ENCODE measurements at regions of chr4 and their contacts with region 1.

Region 1: DNA sequence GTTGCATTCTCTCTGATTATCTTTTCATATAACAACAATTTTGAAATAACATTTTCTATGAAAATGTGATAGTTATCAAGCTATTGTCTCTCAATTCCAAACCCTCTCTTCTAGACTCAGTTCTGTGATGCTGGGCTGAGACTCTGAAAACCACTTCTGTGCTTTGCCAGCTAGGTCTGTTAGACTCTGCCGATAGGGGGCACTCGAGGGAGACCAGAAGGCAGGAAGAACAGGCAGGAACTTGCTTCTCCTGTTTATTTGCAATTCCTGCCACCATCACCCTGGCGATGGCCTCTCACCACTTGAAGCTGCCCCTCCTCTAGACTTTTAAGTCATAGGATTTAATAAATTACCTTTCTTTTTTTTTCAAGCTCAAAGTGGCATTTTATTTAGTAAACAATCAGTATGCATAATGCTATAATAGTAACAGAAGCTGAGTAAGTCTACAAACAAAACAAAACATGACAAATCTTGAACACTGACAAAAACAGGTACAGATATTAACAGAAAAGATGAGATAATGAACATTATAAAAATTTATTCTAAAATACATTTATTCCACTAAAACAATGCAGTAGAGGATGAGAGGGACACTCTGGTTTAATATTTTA is 49.7 kb downstream of the RASL11B start:
- DNase-seq: peak; percentile 82
- H3K4me3 Mint-ChIP-seq: no peak overlapping the region
- H3K27ac Mint-ChIP-seq: no peak overlapping the region
- H3K4me1 Mint-ChIP-seq: peaks cover 6% of the 10 kb centered on the region
- H3K27me3 Mint-ChIP-seq: no peaks in the 10 kb centered on the region
- CTCF ChIP-seq: peak; percentile 60

Region 2: GRCh38 chr4:52721968-52722815 is 189.6 kb before region 1 on chr4:
- CTCF ChIA-PET with region 1: no interaction called
- POLR2A ChIA-PET with region 1: no interaction called
- intact Hi-C with region 1: loop called (anchors 2 kb)
- DNase-seq: peak; percentile 98
- H3K4me3 Mint-ChIP-seq: peak overlapping the region; percentile 72
- H3K27ac Mint-ChIP-seq: peak overlapping the region; percentile 11
- H3K4me1 Mint-ChIP-seq: no peaks in the 10 kb centered on the region
- H3K27me3 Mint-ChIP-seq: no peaks in the 10 kb centered on the region
- CTCF ChIP-seq: no peak

Region 3: DNA sequence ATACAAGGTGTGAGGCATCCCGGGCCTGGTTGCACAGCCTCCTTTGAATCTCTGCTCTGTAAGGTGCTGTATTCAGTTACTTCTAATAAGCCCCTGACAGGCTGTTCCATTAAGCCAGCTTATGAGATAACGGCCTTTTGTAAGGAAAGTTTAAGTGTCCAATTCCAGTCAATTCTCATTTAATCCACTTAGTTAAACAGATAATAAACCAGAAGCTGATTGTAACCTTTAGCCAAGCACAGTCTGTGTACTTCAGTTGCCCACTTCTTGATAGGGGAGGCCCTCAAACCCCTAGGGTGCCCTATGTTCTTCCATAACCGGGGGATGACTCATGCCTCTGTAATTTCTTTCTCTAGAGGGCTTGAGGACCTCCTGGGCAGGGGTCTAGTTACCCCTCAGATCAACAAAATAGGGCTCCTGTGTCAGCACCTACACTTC is 13.8 kb after region 1 on chr4:
- CTCF ChIA-PET with region 1: interaction called, 13 read pairs
- POLR2A ChIA-PET with region 1: no interaction called
- intact Hi-C with region 1: no loop called
- DNase-seq: peak; percentile 1
- H3K4me3 Mint-ChIP-seq: no peak overlapping the region
- H3K27ac Mint-ChIP-seq: no peak overlapping the region
- H3K4me1 Mint-ChIP-seq: no peaks in the 10 kb centered on the region
- H3K27me3 Mint-ChIP-seq: no peaks in the 10 kb centered on the region
- CTCF ChIP-seq: no peak

Region 4: GRCh38 chr4:53313510-53313909 is 401.7 kb after region 1 on chr4:
- CTCF ChIA-PET with region 1: no interaction called
- POLR2A ChIA-PET with region 1: no interaction called
- intact Hi-C with region 1: no loop called
- DNase-seq: peak; percentile 43
- H3K4me3 Mint-ChIP-seq: no peak overlapping the region
- H3K27ac Mint-ChIP-seq: no peak overlapping the region
- H3K4me1 Mint-ChIP-seq: peaks cover under 1% of the 10 kb centered on the region
- H3K27me3 Mint-ChIP-seq: no peaks in the 10 kb centered on the region
- CTCF ChIP-seq: no peak

Measured in MCF 10A (cell line).